Endothelial cell of umbilical vein (primary cell): ENCODE measurements at regions of chr19 and their contacts with region 1.

Region 1: GRCh38 chr19:3100081-3100864 is 6.1 kb downstream of the GNA11 start:
- DNase-seq: no peak
- H3K4me3 ChIP-seq: no peak overlapping the region
- H3K27ac ChIP-seq: no peak overlapping the region
- H3K4me1 ChIP-seq: peaks cover 34% of the 10 kb centered on the region
- H3K27me3 ChIP-seq: no peaks in the 10 kb centered on the region
- CTCF ChIP-seq: no peak
- POLR2A ChIP-seq: no peak

Region 2: DNA sequence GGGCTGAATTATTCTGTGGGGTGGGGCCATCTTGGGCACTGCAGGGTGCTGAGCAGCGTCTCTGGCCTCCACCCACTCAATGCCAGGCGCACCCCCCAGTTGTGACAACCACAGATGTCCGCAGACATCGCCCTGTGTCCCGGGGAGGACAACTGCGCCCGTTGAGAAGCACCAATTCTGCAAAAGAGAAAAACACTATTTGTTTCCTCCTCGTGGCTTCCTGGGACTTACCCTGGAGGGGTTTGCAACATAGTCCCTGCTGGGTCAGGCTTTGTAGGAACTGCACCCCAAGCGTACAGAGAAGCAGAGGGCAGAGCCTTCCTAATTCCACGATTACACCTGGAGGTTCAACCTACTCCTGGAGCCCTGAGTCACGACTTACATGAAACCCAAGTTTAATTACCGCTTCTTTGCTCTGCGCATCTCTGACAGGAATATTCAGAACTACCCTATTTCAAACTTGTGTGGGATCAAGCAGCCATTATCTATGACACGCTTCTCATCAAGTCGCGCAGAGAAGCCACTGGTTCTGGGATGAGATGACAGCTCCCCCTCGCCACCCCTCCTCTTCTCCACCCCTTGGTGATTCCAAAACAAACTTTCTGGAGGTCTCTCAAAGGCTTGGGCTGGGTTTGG is 349.3 kb before region 1 on chr19:
- CTCF ChIA-PET with region 1: no interaction called
- POLR2A ChIA-PET with region 1: no interaction called
- dilution Hi-C with region 1: no loop called
- intact Hi-C with region 1: no loop called
- DNase-seq: no peak
- H3K4me3 ChIP-seq: no peak overlapping the region
- H3K27ac ChIP-seq: no peak overlapping the region
- H3K4me1 ChIP-seq: no peaks in the 10 kb centered on the region
- H3K27me3 ChIP-seq: no peaks in the 10 kb centered on the region
- CTCF ChIP-seq: no peak
- POLR2A ChIP-seq: no peak

Region 3: DNA sequence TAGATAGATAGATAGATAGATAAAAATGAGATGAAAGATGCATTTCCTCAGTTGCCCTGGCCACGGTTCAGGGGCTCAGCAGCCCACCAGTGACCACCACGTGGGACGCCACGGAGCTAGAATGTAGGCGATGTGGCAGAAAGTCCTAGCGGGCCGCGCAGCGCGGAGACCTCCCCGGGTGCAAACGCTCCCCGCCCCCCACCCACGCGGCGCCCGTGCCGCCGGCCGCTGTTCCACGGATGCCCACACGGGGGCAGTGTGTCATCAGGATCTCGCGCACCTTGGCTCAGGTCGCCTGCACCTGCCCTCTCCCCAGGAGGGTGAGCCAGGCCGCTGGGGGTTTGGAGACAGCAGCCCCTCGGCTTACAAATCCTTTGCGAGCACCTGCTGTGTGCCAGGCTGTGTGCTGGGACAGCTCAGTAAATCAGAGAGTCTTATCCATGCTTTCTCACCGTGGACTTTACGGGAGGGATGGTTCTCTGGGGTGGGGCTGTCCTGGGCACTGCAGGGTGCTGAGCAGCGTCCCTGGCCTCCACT is 24.3 kb before region 1 on chr19:
- CTCF ChIA-PET with region 1: interaction called, 75 read pairs
- POLR2A ChIA-PET with region 1: interaction called, 3 read pairs
- dilution Hi-C with region 1: no loop called
- intact Hi-C with region 1: loop called (anchors 1 kb)
- DNase-seq: peak; percentile 49
- H3K4me3 ChIP-seq: no peak overlapping the region
- H3K27ac ChIP-seq: no peak overlapping the region
- H3K4me1 ChIP-seq: no peaks in the 10 kb centered on the region
- H3K27me3 ChIP-seq: no peaks in the 10 kb centered on the region
- CTCF ChIP-seq: peak; percentile 92 to 97
- POLR2A ChIP-seq: no peak